B cell (primary cell): ENCODE measurements at regions of chr16 and their contacts with region 1.

Region 1: DNA sequence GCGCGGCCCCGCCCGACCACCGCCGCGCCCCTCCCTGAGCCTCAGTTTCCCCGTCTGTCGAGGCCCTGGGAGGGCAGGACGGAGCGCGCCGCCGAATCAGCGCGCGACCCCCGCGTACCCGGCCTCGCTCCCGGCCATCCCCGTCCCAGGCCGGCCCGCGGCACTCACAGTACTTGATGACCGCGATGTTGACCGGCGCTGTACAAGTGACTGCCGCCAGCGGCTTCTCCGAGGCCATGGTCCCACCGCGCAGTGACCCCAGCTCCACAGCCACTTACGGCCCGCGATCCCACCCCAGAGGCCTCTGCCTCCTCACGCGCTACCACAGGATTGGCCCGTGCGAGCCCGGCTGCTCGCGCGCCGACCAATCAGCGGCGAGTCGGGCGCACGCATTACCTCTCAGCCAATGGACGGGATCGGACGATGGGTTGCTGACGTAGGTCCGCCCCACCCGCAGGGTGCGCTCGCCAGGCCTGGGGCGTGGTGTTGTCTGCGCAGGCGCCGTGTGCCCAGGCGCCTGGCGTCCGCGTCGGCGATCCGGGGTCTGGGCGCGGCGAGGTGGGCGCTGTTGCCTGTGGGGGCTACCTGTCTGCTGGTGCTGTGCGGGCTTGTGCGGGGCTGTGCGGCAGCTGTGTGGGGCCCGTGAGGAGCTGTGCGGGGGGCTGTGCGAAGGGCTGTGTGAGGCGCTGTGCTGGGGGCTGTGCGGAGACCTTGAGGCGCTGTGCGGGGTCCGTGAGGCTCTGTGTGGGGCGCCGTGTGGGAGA is at the start of gene MVD:
- DNase-seq: peak; percentile 97
- ATAC-seq: peak; percentile 96
- H3K4me3 ChIP-seq: peak within 1 kb of the TSS; percentile 49 to 89 (median 88)
- H3K4me3 Mint-ChIP-seq: peak within 1 kb of the TSS; percentile 92
- H3K27ac ChIP-seq: peak within 1 kb of the TSS; percentile 62 to 88
- H3K27ac Mint-ChIP-seq: peak within 1 kb of the TSS; percentile 93
- H3K4me1 ChIP-seq: peaks cover 18 to 30% of the 10 kb centered on the region in 2 donors
- H3K4me1 Mint-ChIP-seq: peaks cover 31% of the 10 kb centered on the region
- H3K27me3 ChIP-seq: no peaks in the 10 kb centered on the region
- H3K27me3 Mint-ChIP-seq: no peaks in the 10 kb centered on the region
- CTCF ChIP-seq: no peak
- total RNA-seq, gene MVD: 84.5 and 95.4 TPM in 2 replicates

Region 2: GRCh38 chr16:88633684-88634140 is 29.3 kb before region 1 on chr16:
- CTCF ChIA-PET with region 1: interaction called, 5 read pairs
- POLR2A ChIA-PET with region 1: interaction called, 4 read pairs
- intact Hi-C with region 1: loop called (anchors 1 kb)
- DNase-seq: no peak
- ATAC-seq: no peak
- H3K4me3 ChIP-seq: peak overlapping the region in 4 of 5 experiments; percentile 62 to 78 (median 68)
- H3K4me3 Mint-ChIP-seq: peak overlapping the region; percentile 85
- H3K27ac ChIP-seq: peak overlapping the region; percentile 81 to 87
- H3K27ac Mint-ChIP-seq: peak overlapping the region; percentile 92
- H3K4me1 ChIP-seq: peaks cover 37 to 56% of the 10 kb centered on the region in 2 donors
- H3K4me1 Mint-ChIP-seq: peaks cover 45% of the 10 kb centered on the region
- H3K27me3 ChIP-seq: peaks cover 0 to 6% (median 0%) of the 10 kb centered on the region in 4 experiments
- H3K27me3 Mint-ChIP-seq: no peaks in the 10 kb centered on the region
- CTCF ChIP-seq: no peak

Region 3: GRCh38 chr16:88700636-88701482 is 37.8 kb after region 1 on chr16:
- CTCF ChIA-PET with region 1: no interaction called
- POLR2A ChIA-PET with region 1: interaction called, 5 read pairs
- intact Hi-C with region 1: loop called (anchors 1 kb)
- DNase-seq: peak; percentile 91
- ATAC-seq: peak; percentile 79
- H3K4me3 ChIP-seq: peak overlapping the region; percentile 32 to 69 (median 54)
- H3K4me3 Mint-ChIP-seq: peak overlapping the region; percentile 84
- H3K27ac ChIP-seq: peak overlapping the region; percentile 84 to 91
- H3K27ac Mint-ChIP-seq: peak overlapping the region; percentile 96
- H3K4me1 ChIP-seq: peaks cover 61 to 83% of the 10 kb centered on the region in 2 donors
- H3K4me1 Mint-ChIP-seq: peaks cover 70% of the 10 kb centered on the region
- H3K27me3 ChIP-seq: no peaks in the 10 kb centered on the region
- H3K27me3 Mint-ChIP-seq: no peaks in the 10 kb centered on the region
- CTCF ChIP-seq: no peak

Region 4: DNA sequence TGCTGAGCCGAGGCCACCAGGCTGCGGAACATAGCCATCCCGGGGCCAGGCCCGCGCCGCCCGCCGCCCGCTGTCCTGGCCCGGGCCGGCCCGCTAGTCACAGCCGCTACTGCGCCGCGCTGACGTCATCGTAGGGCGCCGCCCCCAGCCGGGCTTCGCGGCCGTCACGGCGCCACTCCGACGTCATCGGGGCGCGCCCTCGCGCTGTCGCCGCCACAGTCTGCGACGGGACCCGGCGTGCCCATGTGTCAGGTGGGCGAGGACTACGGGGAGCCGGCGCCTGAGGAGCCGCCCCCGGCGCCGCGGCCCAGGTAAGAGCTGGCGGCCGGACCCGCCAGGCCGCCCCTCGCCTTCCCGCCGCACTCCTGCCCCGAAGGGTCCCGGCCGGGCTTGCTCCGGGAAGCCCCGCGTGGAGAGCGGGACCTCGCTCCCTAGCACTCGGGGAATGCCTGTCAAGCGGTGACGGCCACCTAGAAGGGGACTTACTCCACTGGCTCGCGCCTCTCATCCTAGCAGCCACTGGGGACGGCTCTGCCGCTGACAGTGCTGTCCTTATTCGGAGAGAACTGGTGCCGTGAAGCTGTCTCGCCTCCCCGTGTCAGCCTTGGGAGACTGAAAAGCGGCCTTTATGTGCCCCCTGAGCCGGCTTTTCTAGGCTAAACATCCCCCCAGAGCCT is 43.4 kb after region 1 on chr16 and contains the starts of genes CTU2 and RNF166:
- CTCF ChIA-PET with region 1: no interaction called
- POLR2A ChIA-PET with region 1: interaction called, 5 read pairs
- intact Hi-C with region 1: loop called (anchors 1 kb)
- DNase-seq: peak; percentile 95
- ATAC-seq: peak; percentile 70
- H3K4me3 ChIP-seq: peak within 1 kb of the TSS; percentile 71 to 95 (median 80)
- H3K4me3 Mint-ChIP-seq: peak within 1 kb of the TSS; percentile 85
- H3K27ac ChIP-seq: peak within 1 kb of the TSS; percentile 84 to 91
- H3K27ac Mint-ChIP-seq: peak within 1 kb of the TSS; percentile 92
- H3K4me1 ChIP-seq: peaks cover 48 to 53% of the 10 kb centered on the region in 2 donors
- H3K4me1 Mint-ChIP-seq: peaks cover 47% of the 10 kb centered on the region
- H3K27me3 ChIP-seq: no peaks in the 10 kb centered on the region
- H3K27me3 Mint-ChIP-seq: no peaks in the 10 kb centered on the region
- CTCF ChIP-seq: no peak
- total RNA-seq, gene CTU2: 18.4 and 19.3 TPM in 2 replicates
- total RNA-seq, gene RNF166: 64.1 and 75.8 TPM in 2 replicates

Region 5: GRCh38 chr16:88803264-88803987 is 140.4 kb after region 1 on chr16 and contains the start of gene CDT1:
- CTCF ChIA-PET with region 1: no interaction called
- POLR2A ChIA-PET with region 1: interaction called, 3 read pairs
- intact Hi-C with region 1: loop called (anchors 1 kb)
- DNase-seq: peak; percentile 92
- ATAC-seq: peak; percentile 68
- H3K4me3 ChIP-seq: peak within 1 kb of the TSS; percentile 52 to 81 (median 77)
- H3K4me3 Mint-ChIP-seq: peak within 1 kb of the TSS; percentile 86
- H3K27ac ChIP-seq: peak within 1 kb of the TSS; percentile 54 to 67
- H3K27ac Mint-ChIP-seq: peak within 1 kb of the TSS; percentile 87
- H3K4me1 ChIP-seq: peaks cover 26 to 40% of the 10 kb centered on the region in 2 donors
- H3K4me1 Mint-ChIP-seq: peaks cover 21% of the 10 kb centered on the region
- H3K27me3 ChIP-seq: peaks cover 0 to 4% (median 0%) of the 10 kb centered on the region in 4 experiments
- H3K27me3 Mint-ChIP-seq: no peaks in the 10 kb centered on the region
- CTCF ChIP-seq: no peak
- total RNA-seq, gene CDT1: 0.27 and 1.3 TPM in 2 replicates